Calu3 (cell line): ENCODE measurements at regions of chr7 and their contacts with region 1.

Region 1: DNA sequence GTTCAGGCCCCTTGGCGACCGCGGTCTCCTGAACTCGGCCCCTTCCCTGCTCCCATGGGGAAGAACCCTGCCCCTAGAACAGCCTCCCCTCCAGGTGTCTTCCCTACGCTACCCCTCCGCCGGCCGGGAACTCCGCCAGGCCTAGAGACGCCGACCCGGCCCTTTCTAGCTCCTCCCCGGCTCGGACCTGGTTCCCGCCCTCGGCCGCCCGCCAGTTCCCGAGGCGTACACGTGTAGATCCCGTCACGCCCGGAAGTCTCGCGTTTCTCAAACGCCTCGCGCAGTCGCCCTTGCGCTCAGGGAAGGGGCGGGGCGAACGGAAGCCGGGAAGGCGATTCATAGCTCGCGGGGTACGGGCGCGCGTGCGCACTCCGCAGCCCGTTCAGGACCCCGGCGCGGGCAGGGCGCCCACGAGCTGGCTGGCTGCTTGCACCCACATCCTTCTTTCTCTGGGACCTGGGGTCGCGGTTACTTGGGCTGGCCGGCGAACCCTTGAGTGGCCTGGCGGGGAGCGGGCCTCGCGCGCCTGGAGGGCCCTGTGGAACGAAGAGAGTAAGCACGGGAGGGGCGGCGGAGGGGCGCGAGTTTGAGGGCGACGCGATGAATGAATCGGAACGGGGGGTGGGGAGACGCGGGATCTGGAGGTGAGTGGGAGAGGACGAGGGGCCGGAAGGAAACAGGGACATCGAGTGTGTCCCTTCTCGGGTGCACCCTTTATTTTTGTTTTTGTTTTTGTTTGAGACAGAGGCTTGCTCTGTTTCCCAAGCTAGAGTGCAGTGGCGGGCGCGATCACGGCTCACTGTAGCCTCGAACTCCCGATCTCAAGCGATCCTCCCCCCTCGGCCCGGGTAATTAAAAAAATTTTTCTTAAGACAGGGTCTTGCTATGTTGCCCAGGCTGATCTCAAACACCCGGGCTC is at the start of gene POP7:
- DNase-seq: peak; percentile 96
- H3K4me3 Mint-ChIP-seq: peak within 1 kb of the TSS; percentile 95
- H3K27ac Mint-ChIP-seq: peak within 1 kb of the TSS; percentile 80
- H3K4me1 Mint-ChIP-seq: no peaks in the 10 kb centered on the region
- H3K27me3 Mint-ChIP-seq: peaks cover 8% of the 10 kb centered on the region
- CTCF ChIP-seq: no peak
- total RNA-seq, gene POP7: 28.2 and 31.9 TPM in 2 replicates

Region 2: GRCh38 chr7:100469227-100470044 is 236.6 kb before region 1 on chr7:
- CTCF ChIA-PET with region 1: no interaction called
- intact Hi-C with region 1: no loop called
- DNase-seq: peak; percentile 85
- H3K4me3 Mint-ChIP-seq: no peak overlapping the region
- H3K27ac Mint-ChIP-seq: no peak overlapping the region
- H3K4me1 Mint-ChIP-seq: no peaks in the 10 kb centered on the region
- H3K27me3 Mint-ChIP-seq: no peaks in the 10 kb centered on the region
- CTCF ChIP-seq: peak; percentile 80

Region 3: GRCh38 chr7:100719523-100720319 is 13.7 kb after region 1 on chr7:
- CTCF ChIA-PET with region 1: interaction called, 12 read pairs
- intact Hi-C with region 1: no loop called
- DNase-seq: no peak
- H3K4me3 Mint-ChIP-seq: peak overlapping the region; percentile 49
- H3K27ac Mint-ChIP-seq: no peak overlapping the region
- H3K4me1 Mint-ChIP-seq: no peaks in the 10 kb centered on the region
- H3K27me3 Mint-ChIP-seq: peaks cover 85% of the 10 kb centered on the region
- CTCF ChIP-seq: no peak

Region 4: DNA sequence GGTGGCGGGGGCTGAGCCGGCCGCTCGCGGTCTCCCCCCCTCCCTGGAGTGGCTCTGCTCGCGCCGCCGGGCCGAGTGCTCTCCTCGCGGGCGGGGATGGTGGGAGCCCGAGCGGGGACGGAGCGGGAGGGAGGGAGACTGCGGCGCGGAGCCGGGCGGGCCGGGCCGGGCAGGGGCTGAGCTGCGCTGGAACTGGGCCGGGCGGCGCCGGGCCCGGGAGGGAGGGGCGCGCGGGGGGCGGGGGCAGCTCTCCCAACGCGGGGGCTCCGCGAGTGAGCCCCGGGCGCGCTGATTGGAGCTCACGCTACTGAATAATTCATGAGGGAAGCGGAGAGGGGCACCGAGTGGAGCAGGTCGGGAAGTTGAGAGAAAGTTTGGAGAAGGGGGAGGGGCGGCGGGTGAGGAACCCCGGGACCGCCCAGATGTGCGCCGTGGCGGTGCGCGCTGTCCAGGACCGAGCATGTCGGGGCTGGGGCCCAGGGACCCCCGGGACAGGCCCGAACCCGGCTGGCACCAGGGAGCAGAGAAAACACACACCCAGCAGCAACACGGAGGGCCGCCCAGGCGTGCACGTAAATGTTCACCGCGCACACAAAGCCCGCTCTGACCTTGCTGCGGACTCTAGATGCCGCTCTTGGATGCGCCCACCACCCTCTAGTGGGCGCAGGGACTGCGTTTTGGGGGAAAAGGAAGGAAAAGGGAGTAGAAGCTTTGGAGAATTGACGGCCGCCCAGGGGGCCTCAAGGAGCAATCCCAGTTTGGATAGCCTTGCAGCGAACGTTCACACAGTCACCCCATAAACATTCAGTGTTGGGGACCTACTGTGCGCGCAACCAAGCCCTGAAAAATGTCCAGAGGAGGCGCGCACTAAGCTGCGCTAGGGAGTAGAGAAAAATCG is 121.6 kb after region 1 on chr7 and contains the start of gene EPHB4:
- CTCF ChIA-PET with region 1: interaction called, 12 read pairs
- intact Hi-C with region 1: loop called (anchors 1 kb)
- DNase-seq: peak; percentile 76
- H3K4me3 Mint-ChIP-seq: peak within 1 kb of the TSS; percentile 92
- H3K27ac Mint-ChIP-seq: peak within 1 kb of the TSS; percentile 90
- H3K4me1 Mint-ChIP-seq: peaks cover 39% of the 10 kb centered on the region
- H3K27me3 Mint-ChIP-seq: no peaks in the 10 kb centered on the region
- CTCF ChIP-seq: peak; percentile 42
- total RNA-seq, gene EPHB4: 63.7 and 72.4 TPM in 2 replicates

Region 5: DNA sequence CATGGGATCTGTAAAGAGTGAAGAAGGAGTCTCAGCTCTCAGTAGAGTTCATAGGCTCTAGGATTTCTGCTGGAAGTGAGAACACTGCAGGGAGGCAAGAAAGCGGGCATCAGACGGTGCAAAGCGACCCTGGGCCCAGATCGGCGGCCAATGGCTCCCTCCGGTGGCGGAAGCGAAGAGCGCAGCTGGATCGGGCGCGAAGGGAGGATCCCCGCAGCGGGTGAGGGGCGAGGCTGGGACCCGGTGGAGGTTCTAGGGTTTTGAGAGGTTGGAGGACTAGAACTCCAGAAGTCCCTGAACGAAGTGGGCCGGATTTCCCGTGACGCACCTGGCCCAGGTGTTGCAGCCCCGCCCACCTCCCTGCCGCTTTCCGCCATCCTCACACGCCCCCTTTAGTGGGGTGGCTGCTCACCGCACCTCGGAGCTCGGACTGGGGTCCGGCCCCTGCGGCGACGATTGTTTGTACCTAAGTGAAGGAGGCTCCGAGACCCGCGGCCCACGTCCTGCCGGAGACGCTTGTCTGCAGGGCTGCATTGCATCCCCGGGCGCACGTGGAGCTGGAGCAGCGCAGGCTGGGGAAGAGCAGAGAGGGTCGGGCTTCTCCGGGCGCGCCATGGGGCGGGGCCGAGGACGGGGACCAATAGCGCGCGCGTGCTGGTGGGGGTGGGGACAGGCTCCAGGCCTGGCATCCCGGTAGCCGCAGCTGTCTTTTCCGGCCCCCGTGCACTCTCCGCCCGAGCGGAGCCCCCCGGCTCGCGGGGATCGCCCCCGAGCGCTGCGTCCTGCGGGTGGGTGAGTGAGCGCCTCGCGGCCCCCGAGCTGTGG is 146.2 kb after region 1 on chr7 and contains the start of gene SLC12A9:
- CTCF ChIA-PET with region 1: interaction called, 25 read pairs
- intact Hi-C with region 1: loop called (anchors 1 kb)
- DNase-seq: peak; percentile 87
- H3K4me3 Mint-ChIP-seq: peak within 1 kb of the TSS; percentile 85
- H3K27ac Mint-ChIP-seq: peak within 1 kb of the TSS; percentile 75
- H3K4me1 Mint-ChIP-seq: peaks cover 5% of the 10 kb centered on the region
- H3K27me3 Mint-ChIP-seq: no peaks in the 10 kb centered on the region
- CTCF ChIP-seq: peak; percentile 59
- total RNA-seq, gene SLC12A9: 29.9 and 36.6 TPM in 2 replicates

Region 6: DNA sequence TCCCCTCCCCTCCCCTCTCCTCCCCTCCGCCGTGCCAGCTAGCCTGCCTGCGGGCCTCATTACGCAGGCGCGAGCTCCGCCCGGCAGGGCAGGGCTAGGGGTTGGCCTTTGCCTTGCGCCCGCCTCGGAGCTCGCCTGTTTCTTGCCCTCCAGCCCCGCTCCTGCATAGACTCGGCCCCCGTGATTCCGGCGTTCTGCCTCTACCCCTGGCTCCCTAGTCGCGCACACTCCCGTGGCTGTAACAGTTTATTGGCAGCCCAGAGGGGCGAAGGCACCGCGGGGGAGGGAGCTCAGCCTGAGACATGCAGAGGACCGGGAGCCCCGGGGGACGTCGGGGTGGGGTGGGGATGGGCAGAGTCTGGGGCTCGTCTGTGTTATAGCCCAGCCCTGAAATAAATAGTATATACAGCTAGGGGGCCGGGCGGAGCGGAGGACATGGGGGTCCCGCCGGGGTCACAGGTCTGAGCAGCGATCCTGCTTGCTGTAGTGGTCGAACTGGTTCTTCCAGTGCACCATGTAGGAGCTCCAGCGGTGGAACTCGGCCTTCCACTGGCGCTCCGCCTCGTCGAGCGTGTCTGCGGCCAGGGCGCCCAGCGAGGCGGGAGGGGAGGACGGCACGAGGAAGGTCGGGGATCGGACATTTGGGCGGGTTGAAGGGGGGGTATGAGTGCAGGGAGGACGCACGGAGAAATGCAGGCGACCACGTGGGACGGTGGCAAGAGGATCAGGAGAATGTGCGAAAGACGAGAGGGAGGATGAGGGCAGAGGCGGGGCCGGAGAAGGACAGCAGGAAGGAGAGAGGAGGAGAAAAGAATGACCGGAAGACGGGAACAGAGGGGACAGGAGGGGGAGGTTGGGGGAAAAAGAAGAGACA is 184.0 kb after region 1 on chr7:
- CTCF ChIA-PET with region 1: interaction called, 17 read pairs
- intact Hi-C with region 1: no loop called
- DNase-seq: peak; percentile 88
- H3K4me3 Mint-ChIP-seq: peak overlapping the region; percentile 67
- H3K27ac Mint-ChIP-seq: peak overlapping the region; percentile 61
- H3K4me1 Mint-ChIP-seq: peaks cover 18% of the 10 kb centered on the region
- H3K27me3 Mint-ChIP-seq: no peaks in the 10 kb centered on the region
- CTCF ChIP-seq: no peak

Region 7: DNA sequence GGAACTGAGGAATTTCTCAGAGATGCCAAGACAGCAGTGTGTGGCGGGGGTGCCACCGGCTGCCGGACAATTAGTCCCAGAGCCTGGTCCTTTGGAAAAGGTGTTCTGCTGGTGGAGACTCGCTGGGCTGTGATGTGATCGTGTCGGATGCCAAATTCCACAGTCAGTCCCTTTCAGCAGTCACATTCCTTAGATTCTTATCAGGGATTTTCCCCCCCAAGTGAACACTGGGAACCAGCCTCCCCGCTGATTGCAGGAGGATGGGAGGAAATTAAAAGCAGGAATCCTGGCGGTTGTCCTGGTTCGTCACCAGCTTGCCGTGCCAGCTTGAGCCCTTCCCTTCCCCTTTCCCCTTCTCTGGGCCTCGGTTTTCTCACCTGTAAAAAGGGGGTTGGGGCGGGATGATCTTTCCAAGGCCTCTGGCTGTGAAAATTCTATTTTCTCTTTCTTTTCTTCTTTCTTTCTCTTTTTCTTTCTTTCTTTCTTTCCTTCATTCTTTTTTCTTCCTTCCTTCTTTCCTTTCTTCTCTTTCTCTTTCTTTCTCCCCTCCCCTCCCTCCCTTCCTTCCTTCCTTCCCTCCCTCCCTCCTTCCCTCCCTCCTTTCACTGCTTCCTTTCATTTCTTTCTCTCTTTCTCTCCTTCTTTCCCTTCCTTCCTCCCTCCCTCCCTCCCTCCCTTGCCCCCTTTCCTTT is 696.2 kb after region 1 on chr7:
- CTCF ChIA-PET with region 1: no interaction called
- intact Hi-C with region 1: no loop called
- DNase-seq: no peak
- H3K4me3 Mint-ChIP-seq: no peak overlapping the region
- H3K27ac Mint-ChIP-seq: no peak overlapping the region
- H3K4me1 Mint-ChIP-seq: no peaks in the 10 kb centered on the region
- H3K27me3 Mint-ChIP-seq: peaks cover 94% of the 10 kb centered on the region
- CTCF ChIP-seq: no peak